ENCODE measurements at regions of chr7 and their contacts with region 1.

Region 1: DNA sequence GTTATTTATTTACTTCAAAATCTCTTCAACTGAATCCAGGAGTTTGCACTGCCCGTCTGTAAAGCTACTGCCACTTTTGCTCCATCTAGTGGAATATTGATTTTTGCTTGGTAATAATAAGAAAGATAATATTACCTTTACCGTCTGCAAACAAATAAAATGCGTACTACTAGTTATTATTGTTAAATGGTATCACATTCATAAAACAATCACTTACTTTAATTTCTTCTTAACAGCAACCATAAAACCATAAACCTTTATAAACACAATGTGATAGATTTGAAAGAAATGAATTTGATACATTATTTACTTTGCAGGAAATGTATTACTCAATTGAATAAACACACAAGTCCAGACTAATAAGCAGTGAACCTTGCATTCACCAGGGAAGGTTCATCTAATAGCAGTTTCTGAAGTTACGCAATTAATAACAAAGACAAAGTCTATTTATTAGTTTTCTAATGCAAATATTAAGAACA is 6.4 kb downstream of the AGMO start:
- DNase-seq: no peak
- H3K4me3 ChIP-seq: no peak overlapping the region
- H3K4me3 Mint-ChIP-seq: no peak overlapping the region
- H3K27ac Mint-ChIP-seq: no peak overlapping the region
- H3K4me1 ChIP-seq: peaks cover 5% of the 10 kb centered on the region
- H3K4me1 Mint-ChIP-seq: no peaks in the 10 kb centered on the region
- H3K27me3 ChIP-seq: no peaks in the 10 kb centered on the region
- H3K27me3 Mint-ChIP-seq: peaks cover 6% of the 10 kb centered on the region
- CTCF ChIP-seq: peak in 1 of 2 experiments; percentile 30

Region 2: DNA sequence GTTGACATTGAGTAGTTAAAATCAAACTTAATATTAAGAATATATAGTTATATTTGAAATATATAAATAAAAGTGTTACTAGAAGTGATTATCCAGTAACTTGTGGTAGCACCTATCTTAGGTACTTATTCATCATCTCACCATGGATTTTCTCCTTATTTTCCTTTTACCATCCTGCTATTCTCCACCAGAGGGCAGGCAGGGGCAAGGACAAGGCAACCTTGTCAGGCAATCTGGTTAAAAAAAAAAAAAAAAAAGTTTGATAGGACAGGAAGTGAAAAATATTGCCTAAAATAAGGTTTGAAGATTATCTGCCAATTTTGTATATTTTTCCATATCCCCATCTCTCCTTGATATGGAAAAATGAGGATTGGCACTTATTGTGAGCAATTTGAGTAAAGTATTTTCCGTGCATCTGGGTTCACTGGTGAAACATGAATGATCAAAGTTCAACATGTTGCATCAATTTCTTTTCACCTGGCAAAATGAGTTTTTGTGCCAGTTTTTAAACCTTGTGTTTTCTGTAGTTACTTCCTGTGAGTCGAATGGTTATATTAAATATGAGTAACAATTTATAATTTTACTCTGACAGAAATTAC is 250.3 kb before region 1 on chr7:
- CTCF ChIA-PET with region 1: no interaction called
- POLR2A ChIA-PET with region 1: no interaction called
- intact Hi-C with region 1: loop called (anchors 5 kb)
- DNase-seq: peak; percentile 49 to 69
- H3K4me3 ChIP-seq: no peak overlapping the region
- H3K4me3 Mint-ChIP-seq: no peak overlapping the region
- H3K27ac Mint-ChIP-seq: no peak overlapping the region
- H3K4me1 ChIP-seq: no peaks in the 10 kb centered on the region
- H3K4me1 Mint-ChIP-seq: no peaks in the 10 kb centered on the region
- H3K27me3 ChIP-seq: no peaks in the 10 kb centered on the region
- H3K27me3 Mint-ChIP-seq: no peaks in the 10 kb centered on the region
- CTCF ChIP-seq: peak; percentile 73 to 85

Region 3: DNA sequence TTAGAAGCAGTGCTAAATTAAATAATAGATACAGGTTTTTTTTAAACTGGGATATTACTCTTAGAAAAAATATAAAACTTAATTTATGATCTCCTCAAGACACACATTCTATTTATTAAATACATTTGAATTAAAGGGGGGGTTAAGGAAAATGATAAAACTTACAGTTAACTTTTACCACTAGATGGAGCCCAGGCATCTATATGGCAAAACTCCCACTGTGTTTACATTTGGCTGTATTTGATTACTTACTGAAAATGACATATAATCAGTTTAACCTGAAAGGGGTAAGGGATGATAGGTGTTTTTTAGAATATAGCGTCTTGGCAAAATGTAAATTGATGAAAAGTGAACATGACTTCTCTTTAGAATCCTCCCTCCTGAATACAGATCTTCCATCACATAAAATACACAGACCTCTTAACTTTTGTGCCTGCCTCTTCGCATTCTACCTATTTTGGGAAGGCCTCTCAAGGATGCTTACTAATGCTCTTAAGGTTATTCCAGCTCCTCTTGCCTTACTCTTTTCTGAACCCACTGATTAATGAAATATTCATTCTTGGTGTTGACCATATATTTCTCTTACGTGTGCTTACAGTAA is 229.3 kb before region 1 on chr7:
- CTCF ChIA-PET with region 1: no interaction called
- POLR2A ChIA-PET with region 1: no interaction called
- intact Hi-C with region 1: loop called (anchors 1 kb)
- DNase-seq: peak in 1 of 2 experiments; percentile 19
- H3K4me3 ChIP-seq: no peak overlapping the region
- H3K4me3 Mint-ChIP-seq: no peak overlapping the region
- H3K27ac Mint-ChIP-seq: no peak overlapping the region
- H3K4me1 ChIP-seq: no peaks in the 10 kb centered on the region
- H3K4me1 Mint-ChIP-seq: peaks cover 5% of the 10 kb centered on the region
- H3K27me3 ChIP-seq: no peaks in the 10 kb centered on the region
- H3K27me3 Mint-ChIP-seq: peaks cover 4% of the 10 kb centered on the region
- CTCF ChIP-seq: peak; percentile 53 to 59

Region 4: GRCh38 chr7:15475802-15476530 is 79.5 kb before region 1 on chr7:
- CTCF ChIA-PET with region 1: no interaction called
- POLR2A ChIA-PET with region 1: no interaction called
- intact Hi-C with region 1: no loop called
- DNase-seq: no peak
- H3K4me3 ChIP-seq: no peak overlapping the region
- H3K4me3 Mint-ChIP-seq: no peak overlapping the region
- H3K27ac Mint-ChIP-seq: no peak overlapping the region
- H3K4me1 ChIP-seq: no peaks in the 10 kb centered on the region
- H3K4me1 Mint-ChIP-seq: no peaks in the 10 kb centered on the region
- H3K27me3 ChIP-seq: no peaks in the 10 kb centered on the region
- H3K27me3 Mint-ChIP-seq: peaks cover 11% of the 10 kb centered on the region
- CTCF ChIP-seq: no peak

Region 5: DNA sequence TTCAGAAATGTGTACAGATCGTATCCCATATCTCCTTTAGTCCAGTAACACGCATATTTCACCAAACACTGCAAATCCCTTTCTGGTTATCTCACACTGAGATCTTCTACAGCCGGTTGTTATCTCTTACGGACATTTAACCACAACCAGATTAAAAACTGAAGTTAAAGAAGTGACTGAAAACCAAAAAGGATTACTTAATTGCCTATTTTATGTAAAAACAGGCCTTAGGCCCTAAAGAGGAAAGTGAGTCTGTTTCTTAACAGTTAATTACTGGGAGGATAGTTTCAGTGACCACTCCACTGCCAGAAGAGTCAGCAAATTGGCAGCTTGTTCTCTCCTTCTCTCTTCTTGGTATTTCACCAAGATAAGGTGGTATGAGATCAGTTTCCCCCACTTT is 292.9 kb after region 1 on chr7:
- CTCF ChIA-PET with region 1: no interaction called
- POLR2A ChIA-PET with region 1: no interaction called
- intact Hi-C with region 1: no loop called
- DNase-seq: no peak
- H3K4me3 ChIP-seq: no peak overlapping the region
- H3K4me3 Mint-ChIP-seq: no peak overlapping the region
- H3K27ac Mint-ChIP-seq: no peak overlapping the region
- H3K4me1 ChIP-seq: peaks cover 9% of the 10 kb centered on the region
- H3K4me1 Mint-ChIP-seq: peaks cover 11% of the 10 kb centered on the region
- H3K27me3 ChIP-seq: no peaks in the 10 kb centered on the region
- H3K27me3 Mint-ChIP-seq: no peaks in the 10 kb centered on the region
- CTCF ChIP-seq: no peak